Heart right ventricle (tissue), 16 donors: ENCODE measurements at regions of chr3 and their contacts with region 1.

Region 1: DNA sequence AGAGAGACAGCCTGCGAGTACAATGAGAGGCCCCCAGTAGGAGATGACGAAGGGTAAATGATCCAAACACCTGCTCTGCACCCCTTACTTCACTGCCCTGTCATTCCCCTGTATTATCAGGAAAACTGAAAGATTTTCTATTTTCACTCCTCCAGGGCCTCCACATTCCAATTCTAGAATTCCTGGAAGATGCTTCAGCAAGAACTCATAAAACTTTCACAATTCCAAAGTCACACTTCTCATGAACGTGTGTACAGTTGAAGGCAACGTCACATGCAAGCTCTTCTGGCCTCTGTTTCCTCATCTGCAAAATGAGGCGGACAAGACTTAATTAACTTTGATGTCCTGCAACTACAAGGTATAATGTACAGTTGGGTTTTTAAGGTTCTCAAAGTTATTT is 62.8 kb upstream of the SPATA12 start:
- DNase-seq: no peak
- ATAC-seq: peak in 2 of 8 donors; percentile 25 to 31
- H3K4me3 ChIP-seq: no peak overlapping the region
- H3K27ac ChIP-seq: peak overlapping the region in 1 of 10 donors; percentile 30
- H3K4me1 ChIP-seq: peaks cover 0 to 22% (median 9%) of the 10 kb centered on the region in 9 donors
- H3K27me3 ChIP-seq: no peaks in the 10 kb centered on the region
- CTCF ChIP-seq: no peak

Region 2: GRCh38 chr3:57012847-57013246 is 15.2 kb after region 1 on chr3:
- intact Hi-C with region 1: no loop called
- DNase-seq: no peak
- ATAC-seq: no peak
- H3K4me3 ChIP-seq: no peak overlapping the region
- H3K27ac ChIP-seq: no peak overlapping the region
- H3K4me1 ChIP-seq: peaks cover 3 to 29% (median 14%) of the 10 kb centered on the region in 9 donors
- H3K27me3 ChIP-seq: no peaks in the 10 kb centered on the region
- CTCF ChIP-seq: no peak

Region 3: DNA sequence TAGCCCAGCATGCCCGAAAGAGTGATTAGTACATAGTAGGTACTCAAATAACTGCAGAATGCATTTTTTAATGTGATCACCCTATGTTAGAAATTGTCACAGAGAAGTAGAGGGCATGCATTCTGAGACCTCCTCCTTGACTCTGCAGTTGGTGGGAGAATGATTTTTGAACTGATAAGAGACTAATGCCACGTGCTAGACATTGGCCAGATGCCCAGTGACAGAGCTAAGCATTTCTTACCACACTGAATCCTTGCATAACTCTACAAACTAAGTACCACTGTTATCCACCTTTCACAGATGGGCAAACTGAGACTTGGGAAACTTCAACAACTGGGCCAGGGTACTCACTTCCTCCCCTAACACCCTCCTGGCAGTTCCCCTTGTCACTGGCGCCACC is 29.2 kb after region 1 on chr3:
- intact Hi-C with region 1: no loop called
- DNase-seq: no peak
- ATAC-seq: no peak
- H3K4me3 ChIP-seq: no peak overlapping the region
- H3K27ac ChIP-seq: no peak overlapping the region
- H3K4me1 ChIP-seq: no peaks in the 10 kb centered on the region
- H3K27me3 ChIP-seq: no peaks in the 10 kb centered on the region
- CTCF ChIP-seq: no peak

Region 4: DNA sequence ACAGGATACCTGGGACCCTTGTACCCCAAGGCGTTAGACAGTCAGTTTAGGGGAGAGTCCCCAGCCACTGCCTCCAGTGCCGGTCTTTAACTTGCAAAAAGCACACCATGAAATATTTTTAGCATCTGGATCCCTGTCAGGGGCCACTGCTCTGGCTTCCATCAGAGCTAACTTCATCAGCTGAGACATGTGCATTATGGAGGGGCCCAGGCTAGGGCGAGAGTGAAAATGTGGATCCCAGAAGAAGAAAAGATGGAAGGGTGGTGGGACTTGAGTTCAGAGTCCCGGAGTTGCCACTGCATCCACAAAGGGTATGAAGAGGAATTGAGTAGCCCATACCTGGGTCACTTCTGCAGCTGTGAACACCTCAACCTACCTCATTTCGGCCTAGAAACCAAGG is 39.3 kb after region 1 on chr3:
- intact Hi-C with region 1: loop called in 1 of 10 experiments (anchors 2 kb)
- DNase-seq: peak in 1 of 2 donors; percentile 42
- ATAC-seq: peak; percentile 46 to 85 (median 76)
- H3K4me3 ChIP-seq: no peak overlapping the region
- H3K27ac ChIP-seq: peak overlapping the region in 4 of 10 donors; percentile 21 to 60 (median 48)
- H3K4me1 ChIP-seq: peaks cover 3 to 24% (median 11%) of the 10 kb centered on the region in 9 donors
- H3K27me3 ChIP-seq: no peaks in the 10 kb centered on the region
- CTCF ChIP-seq: no peak

Region 5: DNA sequence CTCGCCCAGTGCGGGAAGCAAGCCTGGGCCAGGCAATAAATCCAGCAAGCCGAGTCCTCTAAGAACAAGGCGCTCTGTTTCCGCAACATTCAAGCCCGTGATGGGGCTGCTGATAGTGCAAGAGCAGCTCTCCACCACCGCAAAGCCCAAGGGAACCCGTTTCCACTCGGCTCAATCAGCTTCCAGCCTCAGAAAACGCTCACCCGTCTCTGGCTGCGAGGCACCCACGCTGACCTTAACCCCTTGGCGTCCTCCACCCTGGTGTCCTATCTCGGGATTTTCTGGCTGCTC is 80.6 kb after region 1 on chr3:
- intact Hi-C with region 1: loop called in 8 of 10 experiments (anchors 5 to 10 kb)
- DNase-seq: peak; percentile 36 to 48
- ATAC-seq: peak in 7 of 8 donors; percentile 36 to 76 (median 44)
- H3K4me3 ChIP-seq: peak overlapping the region; percentile 52 to 85 (median 76)
- H3K27ac ChIP-seq: peak overlapping the region in 6 of 10 donors; percentile 16 to 58 (median 43)
- H3K4me1 ChIP-seq: peaks cover 0 to 15% (median 12%) of the 10 kb centered on the region in 9 donors
- H3K27me3 ChIP-seq: peaks cover 0 to 48% (median 0%) of the 10 kb centered on the region in 7 donors
- CTCF ChIP-seq: no peak

Region 6: DNA sequence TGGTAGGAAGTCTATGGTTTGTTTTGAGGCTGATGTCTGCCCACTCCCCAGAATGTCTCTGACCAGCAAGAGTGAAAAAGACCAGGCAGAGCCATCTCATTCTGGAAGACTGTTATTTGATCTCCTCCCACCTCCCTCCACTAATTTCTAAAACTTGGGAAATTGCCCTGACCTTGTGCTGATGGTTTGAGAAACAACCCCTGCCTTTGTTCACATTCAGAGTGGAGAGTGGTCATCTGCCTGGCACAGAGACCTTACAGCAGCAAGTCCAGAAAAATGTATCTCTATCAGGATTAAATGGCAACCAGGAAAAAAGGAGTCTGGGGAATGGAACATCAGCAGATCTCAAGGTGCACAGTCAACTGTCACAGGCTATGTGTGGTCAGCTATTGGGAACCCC is 88.5 kb after region 1 on chr3:
- intact Hi-C with region 1: loop called in 2 of 10 experiments (anchors 10 kb)
- DNase-seq: no peak
- ATAC-seq: no peak
- H3K4me3 ChIP-seq: no peak overlapping the region
- H3K27ac ChIP-seq: no peak overlapping the region
- H3K4me1 ChIP-seq: peaks cover 0 to 4% (median 0%) of the 10 kb centered on the region in 9 donors
- H3K27me3 ChIP-seq: no peaks in the 10 kb centered on the region
- CTCF ChIP-seq: no peak

Region 7: DNA sequence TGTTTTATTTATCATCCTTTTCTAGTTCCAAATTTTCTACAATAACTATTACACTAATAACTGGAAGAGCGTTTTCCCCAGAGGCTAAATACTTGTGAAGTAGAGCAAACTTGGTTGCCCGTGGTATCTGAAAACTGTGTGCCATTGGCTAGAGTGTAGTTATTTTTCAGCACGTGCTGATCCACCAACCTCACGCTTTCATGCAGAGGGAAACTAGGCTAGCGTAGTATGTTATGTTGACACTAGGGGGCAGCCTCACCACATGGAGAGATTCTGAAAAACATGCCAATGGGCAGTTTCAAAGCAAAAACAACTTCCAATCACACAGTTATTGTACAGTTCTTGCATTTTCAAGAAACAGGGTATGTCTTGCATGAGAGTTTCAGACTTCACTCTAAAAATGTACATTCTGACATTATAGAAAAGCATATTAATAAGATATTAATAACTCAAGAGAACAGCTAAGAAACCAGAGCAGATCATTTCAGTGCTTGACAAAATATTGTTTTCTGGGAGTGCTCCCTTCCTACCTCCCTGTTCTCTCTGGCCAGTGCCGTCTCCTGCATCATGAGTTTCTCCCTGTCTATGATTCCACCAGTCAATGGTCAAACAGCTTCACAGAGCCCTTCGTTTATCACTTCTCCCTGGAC is 102.5 kb after region 1 on chr3:
- intact Hi-C with region 1: loop called in 1 of 10 experiments (anchors 5 kb)
- DNase-seq: peak in 1 of 2 donors; percentile 72
- ATAC-seq: peak in 7 of 8 donors; percentile 60 to 86 (median 76)
- H3K4me3 ChIP-seq: no peak overlapping the region
- H3K27ac ChIP-seq: no peak overlapping the region
- H3K4me1 ChIP-seq: peaks cover 0 to 8% (median 0%) of the 10 kb centered on the region in 9 donors
- H3K27me3 ChIP-seq: no peaks in the 10 kb centered on the region
- CTCF ChIP-seq: peak; percentile 81 to 95 (median 91)

Region 8: GRCh38 chr3:57221883-57222282 is 224.2 kb after region 1 on chr3:
- intact Hi-C with region 1: loop called in 7 of 10 experiments (anchors 5 to 10 kb)
- DNase-seq: no peak
- ATAC-seq: no peak
- H3K4me3 ChIP-seq: no peak overlapping the region
- H3K27ac ChIP-seq: no peak overlapping the region
- H3K4me1 ChIP-seq: peaks cover 0 to 11% (median 5%) of the 10 kb centered on the region in 9 donors
- H3K27me3 ChIP-seq: no peaks in the 10 kb centered on the region
- CTCF ChIP-seq: peak in 8 of 9 donors; percentile 18 to 58 (median 42)

Region 9: DNA sequence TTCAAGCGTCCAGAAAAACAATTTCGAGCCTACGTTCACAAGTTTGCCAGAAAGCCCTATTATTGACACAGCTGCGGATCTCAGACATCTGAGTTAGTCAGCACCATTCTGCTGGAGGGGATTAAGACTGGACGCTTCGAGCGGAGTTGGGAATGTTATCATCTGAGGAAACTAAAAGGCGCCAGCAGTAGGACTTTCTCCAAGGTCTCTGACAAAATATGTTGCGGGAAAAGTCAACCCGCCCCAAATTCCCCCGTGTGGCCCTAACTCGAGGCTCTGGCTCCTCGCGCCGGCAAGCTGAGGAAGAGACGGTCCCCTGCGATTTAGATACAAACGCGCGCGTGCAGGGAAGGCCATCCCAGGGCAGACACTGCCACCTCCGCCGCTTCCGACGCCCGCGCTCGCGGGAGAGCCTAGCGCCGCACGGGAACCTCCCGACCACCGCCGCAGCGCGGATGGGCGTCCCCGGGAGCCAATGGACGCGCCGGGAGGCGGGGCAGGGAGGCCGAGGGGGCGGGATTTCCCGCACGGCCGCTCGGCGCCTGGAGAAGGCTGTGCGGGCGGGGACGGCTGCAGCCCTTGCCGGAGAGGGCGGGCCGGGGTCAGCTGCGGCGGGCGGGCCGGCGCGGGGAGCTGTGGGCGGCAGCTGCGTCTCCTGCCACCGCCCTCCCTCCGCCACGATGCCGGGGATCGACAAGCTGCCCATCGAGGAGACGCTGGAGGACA is 229.7 kb after region 1 on chr3 and contains the start of gene APPL1:
- intact Hi-C with region 1: loop called in 7 of 10 experiments (anchors 5 to 10 kb)
- DNase-seq: peak; percentile 93 to 96
- ATAC-seq: peak; percentile 98 to 99 (median 99)
- H3K4me3 ChIP-seq: peak within 1 kb of the TSS; percentile 65 to 97 (median 82)
- H3K27ac ChIP-seq: peak within 1 kb of the TSS; percentile 90 to 97 (median 95)
- H3K4me1 ChIP-seq: peaks cover 0 to 37% (median 30%) of the 10 kb centered on the region in 9 donors
- H3K27me3 ChIP-seq: no peaks in the 10 kb centered on the region
- CTCF ChIP-seq: peak in 2 of 9 donors; percentile 6 to 11
- total RNA-seq, gene APPL1: 44.7 to 58.7 (median 51.0) TPM

Region 10: DNA sequence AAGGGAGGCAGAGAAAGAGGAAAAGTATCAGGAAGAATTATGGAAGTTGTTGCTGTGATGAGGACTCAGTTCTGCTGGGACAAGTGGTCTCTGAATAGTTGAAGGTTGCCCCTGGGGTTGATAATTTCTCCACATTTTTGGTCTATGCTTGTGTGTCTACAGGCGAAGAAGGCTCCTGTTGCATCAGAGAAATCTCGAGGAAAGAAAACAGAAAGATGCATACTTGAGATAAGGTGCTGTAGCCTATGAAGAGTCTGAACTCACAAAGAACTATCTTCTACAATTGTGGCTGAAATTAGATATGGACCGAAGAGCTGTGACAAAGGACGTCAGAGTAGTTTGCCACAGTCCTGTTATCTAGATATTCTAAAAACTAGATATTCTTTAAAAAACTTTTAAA is 318.0 kb after region 1 on chr3:
- intact Hi-C with region 1: no loop called
- DNase-seq: no peak
- ATAC-seq: no peak
- H3K4me3 ChIP-seq: no peak overlapping the region
- H3K27ac ChIP-seq: no peak overlapping the region
- H3K4me1 ChIP-seq: no peaks in the 10 kb centered on the region
- H3K27me3 ChIP-seq: no peaks in the 10 kb centered on the region
- CTCF ChIP-seq: no peak